ENCODE measurements at regions of chr12 and their contacts with region 1.

Region 1: GRCh38 chr12:121550974-121551634 is 29.7 kb downstream of the KDM2B start:
- DNase-seq: no peak
- ATAC-seq: no peak

Region 2: GRCh38 chr12:121472150-121472905 is 78.8 kb before region 1 on chr12:
- intact Hi-C with region 1: no loop called
- DNase-seq: no peak
- ATAC-seq: no peak

Region 3: GRCh38 chr12:121668750-121669520 is 117.8 kb after region 1 on chr12:
- intact Hi-C with region 1: loop called in 1 of 2 experiments (anchors 5 kb)
- DNase-seq: peak; percentile 46
- ATAC-seq: no peak

Region 4: DNA sequence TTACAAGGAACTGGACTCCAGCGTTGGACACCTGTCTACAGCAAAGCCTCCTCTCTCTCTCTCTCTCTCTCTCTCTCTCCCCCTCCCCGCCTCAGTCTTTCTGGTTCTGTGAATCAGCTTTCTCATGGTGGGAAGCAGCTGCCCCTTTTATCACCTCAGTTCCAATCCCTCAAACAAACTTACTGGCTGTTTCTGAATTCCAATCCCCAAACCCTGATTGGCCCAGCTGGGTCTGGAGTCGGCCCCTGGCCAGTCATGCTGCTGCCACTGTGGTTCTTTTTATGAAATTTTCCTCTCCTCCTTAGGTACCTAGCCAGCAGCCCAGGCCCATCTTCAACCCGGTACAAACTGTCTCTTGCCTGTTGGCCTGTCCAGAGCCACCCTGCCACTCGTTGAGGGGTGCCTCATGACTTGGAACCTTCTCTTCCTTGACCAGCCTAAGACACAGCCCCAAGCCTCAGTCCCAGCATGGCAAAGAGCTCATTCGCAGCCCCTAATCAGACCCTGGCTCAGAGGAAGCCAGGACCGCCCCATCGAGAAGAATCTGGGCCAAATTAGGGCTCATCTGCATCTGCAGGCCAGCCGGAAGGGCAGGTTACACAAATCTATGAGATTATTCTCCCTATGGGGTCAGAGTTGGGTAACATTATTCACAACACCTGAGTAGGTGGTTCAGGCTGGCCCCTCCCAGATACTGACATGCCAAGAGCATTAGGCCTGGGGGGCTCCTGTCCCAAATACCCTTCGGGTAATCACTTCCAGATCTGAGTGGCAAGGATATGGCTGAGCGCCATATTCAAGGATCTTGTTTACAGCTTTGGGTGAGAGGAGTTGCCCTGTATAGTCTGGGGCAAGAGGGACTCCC is 127.8 kb after region 1 on chr12:
- intact Hi-C with region 1: loop called (anchors 2 to 5 kb)
- DNase-seq: no peak
- ATAC-seq: no peak